WTC11 (cell line): ENCODE measurements at regions of chr9 and their contacts with region 1.

Region 1: GRCh38 chr9:133992780-133993634 is 883 bp upstream of the VAV2 start:
- DNase-seq: peak; percentile 66
- ATAC-seq: peak; percentile 49
- H3K4me3 Mint-ChIP-seq: peak overlapping the region; percentile 64
- H3K27ac Mint-ChIP-seq: no peak overlapping the region
- H3K4me1 Mint-ChIP-seq: peaks cover 26% of the 10 kb centered on the region
- H3K27me3 Mint-ChIP-seq: no peaks in the 10 kb centered on the region
- CTCF ChIP-seq: no peak

Region 2: GRCh38 chr9:133782157-133783130 is 210.6 kb before region 1 on chr9:
- CTCF ChIA-PET with region 1: interaction called, 80 read pairs
- POLR2A ChIA-PET with region 1: no interaction called
- DNase-seq: peak; percentile 83
- ATAC-seq: peak; percentile 88
- H3K4me3 Mint-ChIP-seq: no peak overlapping the region
- H3K27ac Mint-ChIP-seq: no peak overlapping the region
- H3K4me1 Mint-ChIP-seq: no peaks in the 10 kb centered on the region
- H3K27me3 Mint-ChIP-seq: no peaks in the 10 kb centered on the region
- CTCF ChIP-seq: no peak; the same call in 1 of the 2 replicates

Region 3: GRCh38 chr9:133792721-133793470 is 200.1 kb before region 1 on chr9:
- CTCF ChIA-PET with region 1: interaction called, 18 read pairs
- POLR2A ChIA-PET with region 1: no interaction called
- DNase-seq: peak; percentile 80
- ATAC-seq: peak; percentile 83
- H3K4me3 Mint-ChIP-seq: no peak overlapping the region
- H3K27ac Mint-ChIP-seq: no peak overlapping the region; the same call in 1 of the 2 replicates
- H3K4me1 Mint-ChIP-seq: no peaks in the 10 kb centered on the region
- H3K27me3 Mint-ChIP-seq: no peaks in the 10 kb centered on the region
- CTCF ChIP-seq: peak; percentile 81

Region 4: DNA sequence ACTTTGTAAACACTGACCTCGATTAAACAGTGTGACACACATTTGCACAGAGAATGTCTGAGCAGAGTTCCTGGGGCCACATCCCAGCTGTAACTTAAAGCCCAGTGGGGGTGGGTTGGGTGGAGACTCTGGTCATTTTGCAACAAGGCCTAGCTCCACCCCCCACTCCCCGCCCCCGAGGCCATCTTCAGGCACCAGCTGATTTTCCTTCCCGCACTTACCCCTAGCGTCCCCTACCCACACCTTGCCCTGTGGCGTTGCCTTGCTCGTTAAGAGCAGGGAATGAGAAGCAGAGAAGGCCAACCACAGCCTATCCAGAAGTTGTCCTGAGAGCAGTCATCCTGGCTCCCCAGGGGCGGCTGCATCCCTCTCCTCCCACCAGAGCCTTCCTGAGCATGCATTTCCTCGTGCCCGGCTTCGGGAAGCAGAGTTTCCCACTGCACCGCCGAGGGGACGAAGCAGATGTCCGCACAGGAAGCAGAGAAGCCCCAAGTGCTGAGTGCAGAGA is 153.1 kb before region 1 on chr9:
- CTCF ChIA-PET with region 1: interaction called, 19 read pairs
- POLR2A ChIA-PET with region 1: no interaction called
- DNase-seq: peak; percentile 62
- ATAC-seq: peak; percentile 73
- H3K4me3 Mint-ChIP-seq: peak overlapping the region; percentile 30
- H3K27ac Mint-ChIP-seq: peak overlapping the region; percentile 84
- H3K4me1 Mint-ChIP-seq: peaks cover 46% of the 10 kb centered on the region
- H3K27me3 Mint-ChIP-seq: no peaks in the 10 kb centered on the region
- CTCF ChIP-seq: no peak

Region 5: DNA sequence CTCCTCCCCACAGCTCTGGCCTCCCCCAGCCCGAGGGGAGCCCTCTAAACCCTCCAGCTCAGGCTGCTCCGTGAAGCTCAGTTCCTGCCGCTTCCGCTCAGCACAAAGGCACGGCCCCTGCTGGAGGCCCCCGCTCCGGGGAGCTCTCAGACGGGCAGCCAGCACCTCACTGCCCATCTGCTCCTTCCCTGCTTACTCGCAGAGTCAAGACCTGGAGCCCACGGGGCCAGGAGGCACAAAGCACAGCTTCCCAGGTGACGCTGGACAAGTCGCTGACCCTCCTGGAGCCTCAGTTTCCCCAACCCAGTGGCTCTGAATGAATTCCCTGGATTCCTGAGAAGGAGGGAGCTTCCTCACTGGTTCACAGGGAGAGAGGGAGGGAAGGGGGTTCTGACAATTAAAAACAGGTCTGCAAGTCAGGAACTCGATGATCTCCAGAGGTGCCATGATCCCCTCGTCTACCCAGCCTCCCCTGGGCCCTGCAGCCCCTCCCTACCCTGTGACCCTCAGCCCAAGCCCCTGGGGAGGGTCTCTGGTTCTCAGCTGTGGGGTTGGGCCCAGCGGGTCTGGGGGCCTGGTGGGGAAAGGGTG is 37.1 kb before region 1 on chr9:
- CTCF ChIA-PET with region 1: interaction called, 28 read pairs
- POLR2A ChIA-PET with region 1: interaction called, 3 read pairs
- DNase-seq: peak; percentile 66
- ATAC-seq: peak; percentile 76
- H3K4me3 Mint-ChIP-seq: peak overlapping the region; percentile 51
- H3K27ac Mint-ChIP-seq: peak overlapping the region; percentile 97
- H3K4me1 Mint-ChIP-seq: peaks cover 57% of the 10 kb centered on the region
- H3K27me3 Mint-ChIP-seq: no peaks in the 10 kb centered on the region
- CTCF ChIP-seq: no peak

Region 6: DNA sequence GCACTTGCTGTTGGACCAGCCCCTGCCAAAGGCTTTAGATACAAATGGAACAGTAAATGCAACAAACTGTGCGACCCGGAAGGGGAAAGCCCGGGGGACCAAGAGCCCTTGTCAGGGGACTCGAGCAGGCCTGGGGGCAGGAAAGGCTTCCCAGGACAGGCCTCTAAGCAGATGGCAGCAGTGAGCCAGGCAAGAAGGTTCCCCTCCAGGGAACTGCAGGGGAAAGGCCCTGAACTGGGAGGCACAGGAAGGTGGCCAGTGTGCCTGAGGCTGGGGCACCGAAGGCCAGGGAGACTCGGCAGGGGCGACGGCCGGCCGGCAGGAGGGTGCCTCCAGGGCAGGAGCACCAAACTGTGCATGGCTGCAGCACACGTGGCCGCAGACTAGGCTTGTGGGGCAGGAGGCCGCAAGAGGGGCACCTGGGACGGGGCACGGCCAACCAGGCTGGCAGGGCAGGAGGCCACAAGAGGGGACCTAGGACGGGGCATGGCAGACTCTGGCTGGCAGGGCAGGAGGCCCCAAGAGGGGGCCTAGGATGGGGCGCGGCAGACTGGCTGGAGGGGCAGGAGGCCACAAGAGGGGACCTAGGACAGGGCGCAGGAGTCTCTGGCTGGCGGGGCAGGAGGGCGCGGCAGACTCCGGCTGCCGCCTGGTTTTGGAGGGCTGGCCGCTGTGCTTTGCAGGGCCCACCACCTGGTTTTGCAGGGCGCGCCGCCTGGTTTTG is 10.9 kb before region 1 on chr9:
- CTCF ChIA-PET with region 1: no interaction called
- POLR2A ChIA-PET with region 1: no interaction called
- DNase-seq: peak; percentile 11
- ATAC-seq: no peak; the same call in 1 of the 2 replicates
- H3K4me3 Mint-ChIP-seq: no peak overlapping the region
- H3K27ac Mint-ChIP-seq: no peak overlapping the region
- H3K4me1 Mint-ChIP-seq: peaks cover 22% of the 10 kb centered on the region
- H3K27me3 Mint-ChIP-seq: no peaks in the 10 kb centered on the region
- CTCF ChIP-seq: no peak

Region 7: GRCh38 chr9:134011401-134011800 is 18.4 kb after region 1 on chr9:
- CTCF ChIA-PET with region 1: no interaction called
- POLR2A ChIA-PET with region 1: no interaction called
- DNase-seq: no peak
- ATAC-seq: no peak
- H3K4me3 Mint-ChIP-seq: no peak overlapping the region
- H3K27ac Mint-ChIP-seq: no peak overlapping the region
- H3K4me1 Mint-ChIP-seq: no peaks in the 10 kb centered on the region
- H3K27me3 Mint-ChIP-seq: peaks cover 10% of the 10 kb centered on the region
- CTCF ChIP-seq: no peak

Region 8: GRCh38 chr9:134059661-134060395 is 66.8 kb after region 1 on chr9:
- CTCF ChIA-PET with region 1: no interaction called
- POLR2A ChIA-PET with region 1: no interaction called
- DNase-seq: no peak
- ATAC-seq: no peak
- H3K4me3 Mint-ChIP-seq: no peak overlapping the region
- H3K27ac Mint-ChIP-seq: peak overlapping the region; percentile 72; the same call in 1 of the 2 replicates
- H3K4me1 Mint-ChIP-seq: peaks cover 28% of the 10 kb centered on the region
- H3K27me3 Mint-ChIP-seq: no peaks in the 10 kb centered on the region
- CTCF ChIP-seq: no peak

Region 9: DNA sequence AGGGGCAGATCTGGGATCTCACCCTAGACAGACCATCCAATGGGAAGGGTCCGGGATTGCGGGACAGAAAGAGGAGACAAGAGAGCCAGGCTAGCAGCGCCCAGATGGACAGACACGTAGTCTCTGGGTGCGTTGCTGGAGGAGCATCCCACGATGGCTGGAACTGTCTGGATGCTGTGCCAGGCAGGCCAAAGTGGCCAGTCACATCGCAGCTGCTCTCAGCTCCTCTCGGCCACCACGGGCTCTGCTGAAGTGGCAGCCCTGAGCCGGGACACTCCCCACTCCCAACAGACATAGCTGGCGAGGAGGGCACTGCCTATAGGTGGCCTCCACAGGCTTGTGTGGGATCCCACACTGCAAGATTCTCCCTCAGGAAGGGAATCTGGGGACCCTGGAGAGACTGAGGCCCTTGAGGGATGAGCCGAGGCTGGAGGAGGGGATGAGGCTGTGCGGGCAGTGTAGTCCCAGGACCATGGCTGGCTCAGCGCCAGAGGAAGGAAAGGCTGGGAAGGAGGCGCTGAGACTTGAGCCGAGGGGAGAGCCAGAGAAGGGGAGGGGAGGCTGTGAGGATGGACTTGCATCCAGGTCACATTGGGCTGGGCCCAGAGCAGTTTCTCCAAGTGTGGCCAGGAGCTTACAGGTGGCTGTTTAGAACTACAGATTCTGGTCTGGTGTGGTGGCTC is 132.5 kb after region 1 on chr9:
- CTCF ChIA-PET with region 1: no interaction called
- POLR2A ChIA-PET with region 1: no interaction called
- DNase-seq: no peak
- ATAC-seq: no peak
- H3K4me3 Mint-ChIP-seq: no peak overlapping the region
- H3K27ac Mint-ChIP-seq: no peak overlapping the region
- H3K4me1 Mint-ChIP-seq: no peaks in the 10 kb centered on the region
- H3K27me3 Mint-ChIP-seq: no peaks in the 10 kb centered on the region; the same call in 1 of the 2 replicates
- CTCF ChIP-seq: no peak